Panc1 (cell line): ENCODE measurements at regions of chr4 and their contacts with region 1.

Region 1: DNA sequence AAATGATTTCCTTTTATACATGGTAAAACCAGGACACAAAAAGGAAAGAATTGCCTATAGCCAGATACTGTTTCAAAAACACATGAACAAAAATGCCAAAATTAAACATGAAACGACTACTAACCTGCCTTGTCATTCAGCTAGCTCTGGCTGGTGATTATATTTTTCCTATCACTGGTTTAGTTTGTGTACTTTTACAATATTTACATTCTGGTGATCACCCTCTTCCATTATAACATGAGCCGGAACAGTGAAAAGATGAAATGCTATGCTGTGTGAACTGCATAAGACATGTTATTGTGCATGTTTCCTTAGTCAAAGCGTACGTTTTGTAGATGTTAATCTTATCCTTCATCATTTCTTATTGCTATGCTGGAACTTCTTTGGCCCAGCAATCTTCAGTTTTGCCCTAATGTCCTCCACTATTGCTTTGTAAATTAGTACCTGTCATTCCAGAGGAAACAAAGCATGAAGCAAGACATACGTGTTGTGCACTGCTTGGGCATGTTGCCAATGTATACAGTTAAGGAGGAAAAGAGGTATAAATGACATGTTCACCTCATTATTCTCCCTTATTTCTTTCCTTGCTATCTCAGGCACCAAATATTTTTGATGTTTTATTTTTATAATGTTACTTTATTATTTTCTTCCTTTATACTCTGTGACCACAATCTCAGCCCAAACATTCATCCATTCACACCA is 386.3 kb downstream of the ARHGAP24 start:
- DNase-seq: no peak
- ATAC-seq: no peak
- H3K4me3 ChIP-seq: no peak overlapping the region
- H3K27ac ChIP-seq: no peak overlapping the region
- H3K4me1 ChIP-seq: no peaks in the 10 kb centered on the region; the same call in 1 of the 2 replicates
- H3K27me3 ChIP-seq: no peaks in the 10 kb centered on the region
- CTCF ChIP-seq: no peak

Region 2: GRCh38 chr4:86582410-86582809 is 721.2 kb after region 1 on chr4:
- CTCF ChIA-PET with region 1: no interaction called
- POLR2A ChIA-PET with region 1: interaction called, 10 read pairs
- in situ Hi-C with region 1: no loop called
- intact Hi-C with region 1: no loop called
- DNase-seq: no peak
- ATAC-seq: no peak
- H3K4me3 ChIP-seq: no peak overlapping the region
- H3K27ac ChIP-seq: no peak overlapping the region
- H3K4me1 ChIP-seq: no peaks in the 10 kb centered on the region
- H3K27me3 ChIP-seq: no peaks in the 10 kb centered on the region
- CTCF ChIP-seq: no peak